Caco-2 (cell line): ENCODE measurements at regions of chr15 and their contacts with region 1.

Region 1: GRCh38 chr15:27479296-27480140 is 508.5 kb downstream of the GABRG3 start:
- DNase-seq: no peak
- H3K4me3 ChIP-seq: no peak overlapping the region
- H3K4me3 Mint-ChIP-seq: no peak overlapping the region
- H3K27ac Mint-ChIP-seq: no peak overlapping the region
- H3K4me1 ChIP-seq: no peaks in the 10 kb centered on the region
- H3K4me1 Mint-ChIP-seq: no peaks in the 10 kb centered on the region
- H3K27me3 ChIP-seq: no peaks in the 10 kb centered on the region
- H3K27me3 Mint-ChIP-seq: no peaks in the 10 kb centered on the region
- CTCF ChIP-seq: no peak

Region 2: GRCh38 chr15:27399241-27399640 is 80.3 kb before region 1 on chr15:
- CTCF ChIA-PET with region 1: no interaction called
- POLR2A ChIA-PET with region 1: no interaction called
- intact Hi-C with region 1: no loop called
- DNase-seq: no peak
- H3K4me3 ChIP-seq: no peak overlapping the region
- H3K4me3 Mint-ChIP-seq: no peak overlapping the region
- H3K27ac Mint-ChIP-seq: no peak overlapping the region
- H3K4me1 ChIP-seq: no peaks in the 10 kb centered on the region
- H3K4me1 Mint-ChIP-seq: no peaks in the 10 kb centered on the region
- H3K27me3 ChIP-seq: no peaks in the 10 kb centered on the region
- H3K27me3 Mint-ChIP-seq: peaks cover 2% of the 10 kb centered on the region
- CTCF ChIP-seq: no peak

Region 3: GRCh38 chr15:27418726-27419125 is 60.8 kb before region 1 on chr15:
- CTCF ChIA-PET with region 1: no interaction called
- POLR2A ChIA-PET with region 1: no interaction called
- intact Hi-C with region 1: loop called (anchors 10 kb)
- DNase-seq: no peak
- H3K4me3 ChIP-seq: no peak overlapping the region
- H3K4me3 Mint-ChIP-seq: no peak overlapping the region
- H3K27ac Mint-ChIP-seq: no peak overlapping the region
- H3K4me1 ChIP-seq: no peaks in the 10 kb centered on the region
- H3K4me1 Mint-ChIP-seq: no peaks in the 10 kb centered on the region
- H3K27me3 ChIP-seq: no peaks in the 10 kb centered on the region
- H3K27me3 Mint-ChIP-seq: peaks cover 8% of the 10 kb centered on the region
- CTCF ChIP-seq: no peak

Region 4: GRCh38 chr15:27491666-27492621 is 12.4 kb after region 1 on chr15:
- CTCF ChIA-PET with region 1: no interaction called
- POLR2A ChIA-PET with region 1: no interaction called
- intact Hi-C with region 1: no loop called
- DNase-seq: no peak
- H3K4me3 ChIP-seq: no peak overlapping the region
- H3K4me3 Mint-ChIP-seq: no peak overlapping the region
- H3K27ac Mint-ChIP-seq: no peak overlapping the region
- H3K4me1 ChIP-seq: no peaks in the 10 kb centered on the region
- H3K4me1 Mint-ChIP-seq: no peaks in the 10 kb centered on the region
- H3K27me3 ChIP-seq: no peaks in the 10 kb centered on the region
- H3K27me3 Mint-ChIP-seq: no peaks in the 10 kb centered on the region
- CTCF ChIP-seq: no peak